Panc1 (cell line): ENCODE measurements at regions of chr10 and their contacts with region 1.

Region 1: GRCh38 chr10:121734589-121735045 is 136.4 kb upstream of the FGFR2 start:
- DNase-seq: no peak
- ATAC-seq: peak; percentile 64; the same call in 1 of the 2 replicates
- H3K4me3 ChIP-seq: peak overlapping the region; percentile 12; a peak in 3 of 4 replicates
- H3K27ac ChIP-seq: no peak overlapping the region
- H3K4me1 ChIP-seq: peaks cover 10% of the 10 kb centered on the region
- H3K27me3 ChIP-seq: peaks cover 20% of the 10 kb centered on the region
- CTCF ChIP-seq: peak; percentile 90

Region 2: GRCh38 chr10:120942806-120943413 is 791.7 kb before region 1 on chr10:
- CTCF ChIA-PET with region 1: interaction called, 8 read pairs
- POLR2A ChIA-PET with region 1: no interaction called
- in situ Hi-C with region 1: no loop called
- intact Hi-C with region 1: loop called (anchors 2 kb)
- DNase-seq: peak; percentile 61
- ATAC-seq: peak; percentile 97
- H3K4me3 ChIP-seq: peak overlapping the region in 1 of 2 experiments; percentile 37; a peak in 1 of 4 replicates
- H3K27ac ChIP-seq: no peak overlapping the region
- H3K4me1 ChIP-seq: peaks cover 7% of the 10 kb centered on the region; the same call in 1 of the 2 replicates
- H3K27me3 ChIP-seq: no peaks in the 10 kb centered on the region
- CTCF ChIP-seq: peak; percentile 94

Region 3: GRCh38 chr10:121071901-121072300 is 662.7 kb before region 1 on chr10:
- CTCF ChIA-PET with region 1: interaction called, 11 read pairs
- POLR2A ChIA-PET with region 1: no interaction called
- in situ Hi-C with region 1: no loop called
- intact Hi-C with region 1: no loop called
- DNase-seq: no peak
- ATAC-seq: no peak
- H3K4me3 ChIP-seq: no peak overlapping the region
- H3K27ac ChIP-seq: no peak overlapping the region
- H3K4me1 ChIP-seq: no peaks in the 10 kb centered on the region
- H3K27me3 ChIP-seq: no peaks in the 10 kb centered on the region
- CTCF ChIP-seq: no peak

Region 4: GRCh38 chr10:121615435-121615793 is 119.2 kb before region 1 on chr10:
- CTCF ChIA-PET with region 1: no interaction called
- POLR2A ChIA-PET with region 1: no interaction called
- in situ Hi-C with region 1: no loop called
- intact Hi-C with region 1: loop called (anchors 10 kb)
- DNase-seq: no peak
- ATAC-seq: no peak
- H3K4me3 ChIP-seq: no peak overlapping the region
- H3K27ac ChIP-seq: no peak overlapping the region
- H3K4me1 ChIP-seq: no peaks in the 10 kb centered on the region
- H3K27me3 ChIP-seq: 0 out of 2 replicates have a peak, but pooled peaks cover 3% of the 10 kb centered on the region
- CTCF ChIP-seq: no peak

Region 5: GRCh38 chr10:121900443-121901174 is 166.0 kb after region 1 on chr10:
- CTCF ChIA-PET with region 1: no interaction called
- POLR2A ChIA-PET with region 1: no interaction called
- in situ Hi-C with region 1: no loop called
- intact Hi-C with region 1: loop called (anchors 5 kb)
- DNase-seq: peak; percentile 55
- ATAC-seq: peak; percentile 96
- H3K4me3 ChIP-seq: no peak overlapping the region
- H3K27ac ChIP-seq: no peak overlapping the region
- H3K4me1 ChIP-seq: no peaks in the 10 kb centered on the region
- H3K27me3 ChIP-seq: no peaks in the 10 kb centered on the region
- CTCF ChIP-seq: peak; percentile 83; the same call in 1 of the 2 replicates